ENCODE measurements at regions of chr9 and their contacts with region 1.

Region 1: GRCh38 chr9:114224247-114224610 is 68.9 kb downstream of the COL27A1 start:
- DNase-seq: peak; percentile 91
- ATAC-seq: peak; percentile 86
- H3K4me3 ChIP-seq: peak overlapping the region; percentile 53; the same call in 1 of the 2 replicates
- H3K27ac ChIP-seq: peak overlapping the region; percentile 98
- H3K4me1 ChIP-seq: peaks cover 46% of the 10 kb centered on the region
- H3K27me3 ChIP-seq: no peaks in the 10 kb centered on the region
- CTCF ChIP-seq: no peak

Region 2: DNA sequence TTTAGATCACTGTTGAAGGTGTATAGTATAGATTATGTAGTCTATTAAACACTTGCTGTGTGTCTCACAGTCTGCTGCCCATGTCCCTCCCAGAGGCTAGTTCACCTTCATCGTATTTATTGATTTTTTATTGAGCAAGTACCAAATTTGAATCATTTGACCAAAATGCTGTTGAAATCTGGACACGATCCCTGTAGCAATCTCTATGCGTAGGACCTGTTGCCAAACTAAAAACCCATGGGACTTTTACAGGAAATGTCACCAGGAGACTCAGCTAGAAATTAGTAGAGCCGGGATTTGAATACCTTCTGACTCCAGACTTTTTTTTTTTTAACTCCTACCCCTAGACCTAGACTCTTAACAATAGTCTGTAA is 985.4 kb before region 1 on chr9:
- CTCF ChIA-PET with region 1: no interaction called
- POLR2A ChIA-PET with region 1: no interaction called
- intact Hi-C with region 1: no loop called
- DNase-seq: no peak
- ATAC-seq: no peak
- H3K4me3 ChIP-seq: no peak overlapping the region
- H3K27ac ChIP-seq: no peak overlapping the region
- H3K4me1 ChIP-seq: no peaks in the 10 kb centered on the region
- H3K27me3 ChIP-seq: no peaks in the 10 kb centered on the region
- CTCF ChIP-seq: no peak

Region 3: GRCh38 chr9:114177423-114178064 is 46.7 kb before region 1 on chr9:
- CTCF ChIA-PET with region 1: no interaction called
- POLR2A ChIA-PET with region 1: no interaction called
- intact Hi-C with region 1: loop called (anchors 1 kb)
- DNase-seq: peak; percentile 60
- ATAC-seq: peak; percentile 90
- H3K4me3 ChIP-seq: no peak overlapping the region
- H3K27ac ChIP-seq: peak overlapping the region; percentile 7; the same call in 1 of the 2 replicates
- H3K4me1 ChIP-seq: peaks cover 12% of the 10 kb centered on the region
- H3K27me3 ChIP-seq: no peaks in the 10 kb centered on the region
- CTCF ChIP-seq: no peak

Region 4: DNA sequence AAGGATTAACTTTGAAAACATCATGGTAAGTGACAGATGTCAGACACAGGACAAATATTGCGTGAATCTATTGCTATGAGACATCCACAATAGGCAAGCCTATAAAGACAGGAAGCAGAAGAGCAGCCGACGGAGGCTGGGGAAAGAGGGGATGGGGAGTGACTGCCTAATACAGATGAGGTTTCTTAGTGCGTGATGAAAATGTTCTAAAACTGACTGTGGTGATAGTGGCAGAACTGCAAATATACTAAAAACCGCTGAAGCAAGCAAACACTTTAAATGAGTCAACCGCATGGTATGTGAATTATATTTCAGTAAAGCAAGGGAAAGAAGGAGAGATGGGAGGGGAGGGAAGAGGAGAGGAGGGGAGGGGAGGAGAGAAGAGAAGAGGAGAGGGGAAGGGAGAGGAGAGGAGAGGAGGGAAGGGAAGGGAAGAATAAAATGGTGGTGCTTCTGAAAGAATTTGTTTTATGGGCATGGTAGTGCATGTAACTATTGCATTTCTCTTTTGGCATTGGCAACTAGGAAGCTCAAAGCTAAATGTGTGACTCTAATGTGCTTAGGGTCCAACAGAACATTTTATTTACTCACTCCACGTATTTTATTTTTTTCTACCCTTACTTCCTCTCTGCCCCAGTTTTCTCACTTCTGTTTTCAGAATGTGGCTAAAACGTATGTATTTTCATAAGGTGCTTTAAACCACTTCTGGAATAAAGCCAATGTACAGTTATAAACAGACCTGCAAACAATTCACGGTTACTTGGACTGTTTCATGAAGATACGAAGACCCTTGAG is 142.3 kb after region 1 on chr9:
- CTCF ChIA-PET with region 1: no interaction called
- POLR2A ChIA-PET with region 1: no interaction called
- intact Hi-C with region 1: no loop called
- DNase-seq: peak; percentile 87
- ATAC-seq: peak; percentile 95
- H3K4me3 ChIP-seq: no peak overlapping the region; the same call in 1 of the 2 replicates
- H3K27ac ChIP-seq: peak overlapping the region; percentile 86
- H3K4me1 ChIP-seq: peaks cover 49% of the 10 kb centered on the region
- H3K27me3 ChIP-seq: no peaks in the 10 kb centered on the region
- CTCF ChIP-seq: no peak